Mammary epithelial cell (primary cell): ENCODE measurements at regions of chr6 and their contacts with region 1.

Region 1: DNA sequence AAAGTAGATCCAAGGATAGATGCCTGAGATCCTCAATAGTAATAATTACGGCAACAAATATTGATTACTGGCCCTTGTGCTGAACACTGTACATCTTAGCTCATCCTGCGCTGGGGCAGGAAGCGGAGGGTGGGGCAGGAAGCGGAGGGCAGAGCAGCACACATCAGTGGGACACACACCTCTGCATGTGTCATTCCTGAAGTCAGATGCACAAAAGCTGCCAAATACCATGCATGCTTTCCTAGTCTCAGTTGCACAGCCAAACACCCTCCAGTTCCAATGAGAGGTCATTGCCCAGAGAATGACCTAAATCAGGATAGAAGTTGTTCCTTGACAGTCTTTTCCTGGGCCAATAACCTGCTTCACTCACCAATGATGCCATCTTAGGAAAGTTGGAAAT is 74.4 kb upstream of the FOXC1 start:
- DNase-seq: peak; percentile 17
- H3K4me3 ChIP-seq: no peak overlapping the region
- H3K27ac ChIP-seq: no peak overlapping the region
- H3K4me1 ChIP-seq: peaks cover 13% of the 10 kb centered on the region
- H3K27me3 ChIP-seq: no peaks in the 10 kb centered on the region
- CTCF ChIP-seq: no peak

Region 2: GRCh38 chr6:701700-702479 is 833.4 kb before region 1 on chr6:
- CTCF ChIA-PET with region 1: interaction called, 10 read pairs
- dilution Hi-C with region 1: no loop called
- in situ Hi-C with region 1: no loop called
- intact Hi-C with region 1: no loop called
- DNase-seq: no peak
- H3K4me3 ChIP-seq: no peak overlapping the region
- H3K27ac ChIP-seq: no peak overlapping the region
- H3K4me1 ChIP-seq: no peaks in the 10 kb centered on the region
- H3K27me3 ChIP-seq: no peaks in the 10 kb centered on the region
- CTCF ChIP-seq: no peak

Region 3: GRCh38 chr6:1436334-1437306 is 98.7 kb before region 1 on chr6:
- CTCF ChIA-PET with region 1: no interaction called
- dilution Hi-C with region 1: no loop called
- in situ Hi-C with region 1: no loop called
- intact Hi-C with region 1: no loop called
- DNase-seq: peak; percentile 62
- H3K4me3 ChIP-seq: no peak overlapping the region
- H3K27ac ChIP-seq: no peak overlapping the region
- H3K4me1 ChIP-seq: peaks cover 6% of the 10 kb centered on the region
- H3K27me3 ChIP-seq: no peaks in the 10 kb centered on the region
- CTCF ChIP-seq: peak; percentile 72